Ascending aorta (tissue), 2 donors: ENCODE measurements at regions of chr5 and their contacts with region 1.

Region 1: GRCh38 chr5:143403593-143404415 is at the start of gene NR3C1:
- DNase-seq: peak; percentile 28 to 92
- H3K4me3 ChIP-seq: peak within 1 kb of the TSS; percentile 70 to 91
- H3K27ac ChIP-seq: peak within 1 kb of the TSS; percentile 98 to 99
- H3K4me1 ChIP-seq: peaks cover 0 to 2% of the 10 kb centered on the region in 2 donors
- H3K27me3 ChIP-seq: no peaks in the 10 kb centered on the region
- CTCF ChIP-seq: peak; percentile 21 to 60 (median 55)
- total RNA-seq, gene NR3C1: 18.4 TPM

Region 2: GRCh38 chr5:142674531-142675469 is 729.0 kb before region 1 on chr5:
- intact Hi-C with region 1: no loop called
- DNase-seq: no peak
- H3K4me3 ChIP-seq: no peak overlapping the region
- H3K27ac ChIP-seq: peak overlapping the region in 1 of 2 donors; percentile 52
- H3K4me1 ChIP-seq: no peaks in the 10 kb centered on the region
- H3K27me3 ChIP-seq: no peaks in the 10 kb centered on the region
- CTCF ChIP-seq: no peak

Region 3: DNA sequence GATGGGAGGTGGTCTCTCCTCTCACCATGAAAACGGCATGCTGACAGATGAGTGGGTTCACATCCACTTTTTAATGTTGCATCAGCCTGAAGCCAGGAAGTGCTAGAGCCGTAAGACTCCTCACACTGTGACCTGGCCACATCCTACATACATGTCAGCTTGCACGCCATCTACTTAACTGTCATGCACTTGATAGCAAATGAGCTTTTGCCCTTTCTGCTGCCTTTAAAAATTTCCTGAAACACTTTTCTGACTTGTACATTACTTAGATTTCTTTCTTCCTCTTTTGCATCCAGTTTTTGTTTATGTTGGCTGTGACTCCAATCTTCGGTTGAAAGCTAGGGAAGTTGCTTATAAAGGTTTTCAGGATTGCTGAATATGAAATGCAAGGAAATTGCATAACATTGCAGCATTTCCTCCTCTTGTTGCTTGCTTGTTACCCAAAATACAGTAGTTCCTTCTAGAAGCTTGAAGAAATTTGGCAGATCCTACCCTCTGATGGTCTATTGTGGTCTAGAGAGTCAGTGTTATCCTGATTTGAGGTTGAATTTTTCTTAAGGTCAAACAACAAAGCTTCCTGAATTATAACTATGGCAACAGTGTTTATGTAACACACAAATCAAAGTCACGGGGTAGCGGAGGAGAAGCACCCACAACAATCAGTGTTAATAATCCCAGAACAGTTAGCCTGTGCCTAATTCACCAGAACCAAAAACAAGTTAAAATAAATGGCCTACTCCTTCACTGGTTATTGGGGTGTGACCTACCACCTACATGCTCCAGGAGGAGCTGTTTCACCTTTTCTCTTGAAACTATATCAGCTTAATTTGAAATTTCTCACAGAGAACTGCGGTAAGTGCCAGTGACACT is 401.1 kb before region 1 on chr5:
- intact Hi-C with region 1: loop called (anchors 5 kb)
- DNase-seq: no peak
- H3K4me3 ChIP-seq: peak overlapping the region in 1 of 2 donors; percentile 10
- H3K27ac ChIP-seq: peak overlapping the region; percentile 36 to 44
- H3K4me1 ChIP-seq: peaks cover 10 to 26% of the 10 kb centered on the region in 2 donors
- H3K27me3 ChIP-seq: no peaks in the 10 kb centered on the region
- CTCF ChIP-seq: peak in 2 of 3 experiments; percentile 23 to 46

Region 4: GRCh38 chr5:143106174-143106573 is 297.6 kb before region 1 on chr5:
- intact Hi-C with region 1: loop called (anchors 1 kb)
- DNase-seq: no peak
- H3K4me3 ChIP-seq: no peak overlapping the region
- H3K27ac ChIP-seq: no peak overlapping the region
- H3K4me1 ChIP-seq: peaks cover 0 to 13% of the 10 kb centered on the region in 2 donors
- H3K27me3 ChIP-seq: no peaks in the 10 kb centered on the region
- CTCF ChIP-seq: peak in 1 of 3 experiments; percentile 18

Region 5: GRCh38 chr5:143244000-143244736 is 159.6 kb before region 1 on chr5:
- intact Hi-C with region 1: loop called (anchors 5 kb)
- DNase-seq: peak in 1 of 2 donors; percentile 86
- H3K4me3 ChIP-seq: peak overlapping the region; percentile 19 to 44
- H3K27ac ChIP-seq: peak overlapping the region; percentile 63 to 70
- H3K4me1 ChIP-seq: peaks cover 3 to 13% of the 10 kb centered on the region in 2 donors
- H3K27me3 ChIP-seq: no peaks in the 10 kb centered on the region
- CTCF ChIP-seq: no peak

Region 6: GRCh38 chr5:143341807-143342570 is 61.8 kb before region 1 on chr5:
- intact Hi-C with region 1: loop called (anchors 5 kb)
- DNase-seq: no peak
- H3K4me3 ChIP-seq: no peak overlapping the region
- H3K27ac ChIP-seq: peak overlapping the region in 1 of 2 donors; percentile 4
- H3K4me1 ChIP-seq: peaks cover 5 to 11% of the 10 kb centered on the region in 2 donors
- H3K27me3 ChIP-seq: no peaks in the 10 kb centered on the region
- CTCF ChIP-seq: no peak

Region 7: GRCh38 chr5:143576711-143577484 is 173.1 kb after region 1 on chr5:
- intact Hi-C with region 1: no loop called
- DNase-seq: no peak
- H3K4me3 ChIP-seq: no peak overlapping the region
- H3K27ac ChIP-seq: no peak overlapping the region
- H3K4me1 ChIP-seq: peaks cover 0 to 6% of the 10 kb centered on the region in 2 donors
- H3K27me3 ChIP-seq: no peaks in the 10 kb centered on the region
- CTCF ChIP-seq: no peak